ENCODE measurements at regions of chr1 and their contacts with region 1.

Region 1: GRCh38 chr1:218284934-218285635 is at the start of gene RRP15:
- DNase-seq: peak; percentile 75 to 85 (median 82)
- ATAC-seq: peak; percentile 97
- H3K4me3 ChIP-seq: peak within 1 kb of the TSS; percentile 78
- H3K4me3 Mint-ChIP-seq: peak within 1 kb of the TSS; percentile 87 to 100 (median 98)
- H3K27ac ChIP-seq: peak within 1 kb of the TSS; percentile 77
- H3K27ac Mint-ChIP-seq: peak within 1 kb of the TSS; percentile 89 to 99 (median 95)
- H3K4me1 ChIP-seq: peaks cover 11 to 16% of the 10 kb centered on the region in 2 donors
- H3K4me1 Mint-ChIP-seq: peaks cover 19 to 55% (median 42%) of the 10 kb centered on the region in 7 donors
- H3K27me3 ChIP-seq: no peaks in the 10 kb centered on the region
- H3K27me3 Mint-ChIP-seq: peaks cover 3 to 20% (median 12%) of the 10 kb centered on the region in 5 donors
- total RNA-seq, gene RRP15: 12.8 to 19.0 (median 17.7) TPM

Region 2: GRCh38 chr1:217630711-217631591 is 654.1 kb before region 1 on chr1 and contains the starts of genes GPATCH2 and SPATA17:
- CTCF ChIA-PET with region 1: no interaction called
- POLR2A ChIA-PET with region 1: no interaction called
- intact Hi-C with region 1: loop called (anchors 1 kb)
- DNase-seq: peak; percentile 52 to 92 (median 87)
- ATAC-seq: peak; percentile 94
- H3K4me3 ChIP-seq: peak within 1 kb of the TSS; percentile 68
- H3K4me3 Mint-ChIP-seq: peak within 1 kb of the TSS; percentile 89 to 99 (median 96)
- H3K27ac ChIP-seq: peak within 1 kb of the TSS; percentile 96
- H3K27ac Mint-ChIP-seq: peak within 1 kb of the TSS; percentile 97 to 100 (median 99)
- H3K4me1 ChIP-seq: peaks cover 6 to 12% of the 10 kb centered on the region in 2 donors
- H3K4me1 Mint-ChIP-seq: peaks cover 17 to 53% (median 43%) of the 10 kb centered on the region in 7 donors
- H3K27me3 ChIP-seq: no peaks in the 10 kb centered on the region
- H3K27me3 Mint-ChIP-seq: peaks cover 0 to 7% (median 3%) of the 10 kb centered on the region in 5 donors
- total RNA-seq, gene GPATCH2: 8.6 to 13.3 (median 11.3) TPM
- total RNA-seq, gene SPATA17: not detected

Region 3: GRCh38 chr1:218259800-218260199 is 25.3 kb before region 1 on chr1:
- CTCF ChIA-PET with region 1: no interaction called
- POLR2A ChIA-PET with region 1: no interaction called
- intact Hi-C with region 1: no loop called
- DNase-seq: no peak
- ATAC-seq: peak; percentile 32
- H3K4me3 ChIP-seq: no peak overlapping the region
- H3K4me3 Mint-ChIP-seq: no peak overlapping the region
- H3K27ac ChIP-seq: no peak overlapping the region
- H3K27ac Mint-ChIP-seq: no peak overlapping the region
- H3K4me1 ChIP-seq: no peaks in the 10 kb centered on the region
- H3K4me1 Mint-ChIP-seq: no peaks in the 10 kb centered on the region
- H3K27me3 ChIP-seq: no peaks in the 10 kb centered on the region
- H3K27me3 Mint-ChIP-seq: peaks cover 7 to 38% (median 31%) of the 10 kb centered on the region in 5 donors

Region 4: GRCh38 chr1:218345673-218346390 is 60.7 kb after region 1 on chr1:
- CTCF ChIA-PET with region 1: no interaction called
- POLR2A ChIA-PET with region 1: no interaction called
- intact Hi-C with region 1: loop called in 1 of 2 experiments (anchors 2 kb)
- DNase-seq: peak in 7 of 9 donors; percentile 16 to 39 (median 27)
- ATAC-seq: peak; percentile 75
- H3K4me3 ChIP-seq: peak overlapping the region; percentile 63
- H3K4me3 Mint-ChIP-seq: peak overlapping the region in 2 of 10 donors; percentile 86 to 87
- H3K27ac ChIP-seq: no peak overlapping the region
- H3K27ac Mint-ChIP-seq: peak overlapping the region in 5 of 9 donors; percentile 9 to 74 (median 54)
- H3K4me1 ChIP-seq: peaks cover 4 to 26% of the 10 kb centered on the region in 2 donors
- H3K4me1 Mint-ChIP-seq: peaks cover 14 to 30% (median 25%) of the 10 kb centered on the region in 7 donors
- H3K27me3 ChIP-seq: peaks cover 0 to 3% of the 10 kb centered on the region in 2 donors
- H3K27me3 Mint-ChIP-seq: peaks cover 20 to 48% (median 23%) of the 10 kb centered on the region in 5 donors

Region 5: GRCh38 chr1:220046052-220046930 is 1761.2 kb after region 1 on chr1 and contains the start of gene EPRS1:
- CTCF ChIA-PET with region 1: no interaction called
- POLR2A ChIA-PET with region 1: interaction called, 3 read pairs
- intact Hi-C with region 1: loop called in 1 of 2 experiments (anchors 1 kb)
- DNase-seq: peak; percentile 83 to 97 (median 95)
- ATAC-seq: peak; percentile 99
- H3K4me3 ChIP-seq: peak within 1 kb of the TSS; percentile 92
- H3K4me3 Mint-ChIP-seq: peak within 1 kb of the TSS; percentile 88 to 99 (median 93)
- H3K27ac ChIP-seq: peak within 1 kb of the TSS; percentile 86
- H3K27ac Mint-ChIP-seq: peak within 1 kb of the TSS; percentile 80 to 99 (median 94)
- H3K4me1 ChIP-seq: peaks cover 0 to 23% of the 10 kb centered on the region in 2 donors
- H3K4me1 Mint-ChIP-seq: peaks cover 8 to 48% (median 34%) of the 10 kb centered on the region in 7 donors
- H3K27me3 ChIP-seq: no peaks in the 10 kb centered on the region
- H3K27me3 Mint-ChIP-seq: peaks cover 0 to 3% (median 0%) of the 10 kb centered on the region in 5 donors
- total RNA-seq, gene EPRS1: 39.2 to 130 (median 93.6) TPM

Region 6: DNA sequence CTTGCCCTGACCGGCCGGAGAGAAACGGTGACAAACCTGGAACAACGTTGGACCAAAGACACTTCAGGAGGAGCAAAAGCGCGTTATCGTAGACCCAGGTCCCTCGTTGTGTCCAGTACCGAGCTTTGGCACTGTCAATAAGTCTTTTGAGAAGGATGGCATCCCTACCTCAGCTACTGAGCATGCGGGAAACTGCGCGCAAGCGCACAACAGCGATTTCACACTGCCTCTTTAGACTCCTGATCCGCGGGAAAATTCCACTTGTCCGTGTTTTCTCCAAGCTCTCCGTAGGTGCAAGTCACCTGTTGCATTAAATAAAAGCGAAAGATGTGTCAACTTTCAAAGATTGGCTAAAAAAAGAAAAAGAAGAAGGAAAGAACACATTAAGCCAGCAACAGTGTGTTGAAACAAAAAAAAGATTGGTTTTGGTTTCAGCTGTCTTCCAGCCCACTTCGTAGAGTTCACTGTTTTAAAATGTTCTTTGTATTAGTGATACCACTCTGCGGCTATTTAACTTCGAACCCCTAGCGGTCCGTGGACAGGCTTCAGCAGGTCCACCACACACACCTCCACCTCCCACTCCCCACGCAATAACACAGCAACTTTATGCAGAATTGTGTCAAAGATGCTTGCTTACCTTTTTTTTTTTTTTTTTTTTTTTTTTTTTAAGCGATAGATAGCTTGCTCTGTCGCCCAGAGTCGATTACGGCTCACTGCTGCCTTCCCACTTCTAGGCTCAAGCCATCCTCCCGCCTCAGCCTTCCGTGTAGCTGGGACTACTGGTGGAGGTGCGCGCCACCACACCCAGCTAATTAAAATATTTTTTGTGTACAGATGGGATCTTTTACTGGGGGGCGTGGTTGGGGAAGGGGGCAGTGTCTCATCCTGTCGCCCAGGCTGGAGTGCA is 1804.8 kb after region 1 on chr1 and contains the start of gene BPNT1:
- CTCF ChIA-PET with region 1: no interaction called
- POLR2A ChIA-PET with region 1: no interaction called
- intact Hi-C with region 1: loop called (anchors 1 kb)
- DNase-seq: peak; percentile 90 to 99 (median 97)
- ATAC-seq: peak; percentile 87
- H3K4me3 ChIP-seq: peak within 1 kb of the TSS; percentile 83
- H3K4me3 Mint-ChIP-seq: peak within 1 kb of the TSS; percentile 88 to 100 (median 94)
- H3K27ac ChIP-seq: peak within 1 kb of the TSS; percentile 72
- H3K27ac Mint-ChIP-seq: peak within 1 kb of the TSS; percentile 86 to 97 (median 94)
- H3K4me1 ChIP-seq: peaks cover 9 to 13% of the 10 kb centered on the region in 2 donors
- H3K4me1 Mint-ChIP-seq: peaks cover 0 to 42% (median 36%) of the 10 kb centered on the region in 7 donors
- H3K27me3 ChIP-seq: no peaks in the 10 kb centered on the region
- H3K27me3 Mint-ChIP-seq: peaks cover 0 to 2% (median 0%) of the 10 kb centered on the region in 5 donors
- total RNA-seq, gene BPNT1: 5.5 to 24.6 (median 15.0) TPM